Lower leg skin (tissue), 4 donors: ENCODE measurements at regions of chr16 and their contacts with region 1.

Region 1: GRCh38 chr16:96935-97381 is 18.9 kb downstream of the MPG start:
- DNase-seq: peak; percentile 91 to 98
- H3K4me3 ChIP-seq: no peak overlapping the region
- CTCF ChIP-seq: peak in 2 of 3 donors; percentile 65 to 99
- POLR2A ChIP-seq: no peak

Region 2: DNA sequence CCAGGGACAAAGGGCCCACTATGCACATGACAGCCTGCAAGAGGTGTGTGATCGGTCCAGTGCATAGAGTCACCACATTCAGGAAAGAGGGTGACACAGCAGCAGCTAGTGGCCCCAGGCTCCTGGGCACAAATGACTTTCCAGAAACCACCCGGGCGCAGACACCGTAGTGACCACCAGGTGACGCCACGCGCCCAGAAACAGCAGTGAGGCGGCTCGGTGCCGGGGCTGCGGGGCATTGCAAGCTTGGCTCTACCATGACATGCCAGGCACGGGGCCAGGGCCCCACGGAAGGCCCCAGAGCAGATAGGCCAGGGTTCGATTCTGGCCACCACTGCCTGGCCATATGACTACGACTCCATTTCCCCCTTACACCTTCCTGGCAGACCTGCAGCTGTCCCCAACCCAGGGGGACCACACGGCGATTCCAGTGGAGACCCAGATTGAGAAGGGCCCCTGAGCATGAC is 31.3 kb before region 1 on chr16:
- intact Hi-C with region 1: loop called (anchors 2 kb)
- DNase-seq: peak; percentile 84 to 97
- H3K4me3 ChIP-seq: no peak overlapping the region
- CTCF ChIP-seq: peak in 2 of 3 donors; percentile 47 to 95
- POLR2A ChIP-seq: no peak